HEK293 (cell line): ENCODE measurements at regions of chr16 and their contacts with region 1.

Region 1: DNA sequence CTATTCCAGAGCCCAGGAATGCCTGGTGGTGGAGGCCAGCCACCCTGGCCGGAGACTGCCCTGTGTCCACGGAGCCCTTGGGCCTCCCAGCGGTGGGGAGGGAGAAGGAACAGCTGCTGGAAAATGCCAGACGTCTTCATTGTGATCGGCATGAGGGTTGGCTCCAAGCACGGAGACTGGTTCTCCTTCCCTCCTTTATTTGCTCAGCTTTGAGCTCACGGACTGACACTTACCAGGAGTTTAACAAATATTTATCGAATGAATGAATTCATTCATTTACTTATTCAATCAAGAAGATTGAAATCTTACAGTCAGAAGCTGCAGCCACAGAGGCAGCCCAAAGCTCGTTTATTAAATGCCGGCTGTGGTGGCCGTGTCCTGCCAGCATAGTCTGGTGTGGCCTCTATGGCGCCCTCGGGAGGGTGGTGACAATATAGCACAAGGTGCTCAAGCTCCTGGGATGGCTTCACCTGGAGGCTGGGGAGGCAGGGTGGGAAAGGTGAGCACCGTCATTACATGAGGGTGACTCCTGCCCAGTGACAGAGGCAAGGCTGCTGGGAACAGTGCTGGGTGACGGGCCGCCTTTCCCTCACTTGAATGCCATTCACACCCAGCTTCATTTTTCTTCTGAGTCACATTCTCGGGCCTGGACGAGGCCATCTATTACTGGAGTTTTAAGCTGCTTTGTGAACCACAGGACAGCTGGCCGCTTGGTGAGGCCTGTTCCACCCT is 31.0 kb upstream of the JPH3 start:
- H3K4me3 ChIP-seq: no peak overlapping the region
- H3K27ac ChIP-seq: no peak overlapping the region
- H3K4me1 ChIP-seq: no peaks in the 10 kb centered on the region
- CTCF ChIP-seq: no peak

Region 2: GRCh38 chr16:87216474-87217275 is 354.6 kb before region 1 on chr16:
- CTCF ChIA-PET with region 1: no interaction called
- POLR2A ChIA-PET with region 1: no interaction called
- H3K4me3 ChIP-seq: no peak overlapping the region
- H3K27ac ChIP-seq: no peak overlapping the region
- H3K4me1 ChIP-seq: no peaks in the 10 kb centered on the region
- CTCF ChIP-seq: no peak

Region 3: GRCh38 chr16:87416826-87417527 is 154.3 kb before region 1 on chr16:
- CTCF ChIA-PET with region 1: interaction called, 13 read pairs
- POLR2A ChIA-PET with region 1: no interaction called
- H3K4me3 ChIP-seq: no peak overlapping the region
- H3K27ac ChIP-seq: no peak overlapping the region
- H3K4me1 ChIP-seq: no peaks in the 10 kb centered on the region
- CTCF ChIP-seq: no peak

Region 4: DNA sequence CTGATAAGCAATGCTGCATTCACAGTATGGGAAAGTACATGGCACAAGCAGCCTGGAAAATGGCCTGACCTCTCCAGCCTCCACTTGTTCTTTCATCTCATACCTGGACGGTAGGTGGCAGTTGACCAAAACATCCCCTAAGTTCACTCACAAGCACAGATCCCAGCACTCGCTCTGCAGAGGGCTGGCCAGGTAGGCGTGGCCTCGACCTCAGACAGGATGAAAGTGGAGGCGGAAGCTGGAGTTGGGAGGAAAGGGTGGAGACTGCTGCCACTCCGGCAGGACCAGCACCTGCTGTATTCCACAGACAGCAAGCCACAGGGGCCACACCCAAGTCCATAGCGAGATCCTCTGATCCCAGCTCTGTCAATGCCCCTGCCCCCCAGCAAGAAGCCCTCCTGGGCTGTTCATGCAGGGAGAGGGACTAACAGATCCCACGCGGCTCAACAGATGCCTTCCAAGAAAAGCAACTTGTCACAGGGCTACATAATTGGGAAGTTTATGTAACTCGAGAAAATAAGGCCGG is 109.8 kb before region 1 on chr16:
- CTCF ChIA-PET with region 1: interaction called, 10 read pairs
- POLR2A ChIA-PET with region 1: no interaction called
- H3K4me3 ChIP-seq: peak overlapping the region; percentile 16; the same call in 1 of the 2 replicates
- H3K27ac ChIP-seq: no peak overlapping the region
- H3K4me1 ChIP-seq: peaks cover 29% of the 10 kb centered on the region
- CTCF ChIP-seq: 0 out of 2 replicates have a peak, but pooled peaks have one; percentile 48

Region 5: DNA sequence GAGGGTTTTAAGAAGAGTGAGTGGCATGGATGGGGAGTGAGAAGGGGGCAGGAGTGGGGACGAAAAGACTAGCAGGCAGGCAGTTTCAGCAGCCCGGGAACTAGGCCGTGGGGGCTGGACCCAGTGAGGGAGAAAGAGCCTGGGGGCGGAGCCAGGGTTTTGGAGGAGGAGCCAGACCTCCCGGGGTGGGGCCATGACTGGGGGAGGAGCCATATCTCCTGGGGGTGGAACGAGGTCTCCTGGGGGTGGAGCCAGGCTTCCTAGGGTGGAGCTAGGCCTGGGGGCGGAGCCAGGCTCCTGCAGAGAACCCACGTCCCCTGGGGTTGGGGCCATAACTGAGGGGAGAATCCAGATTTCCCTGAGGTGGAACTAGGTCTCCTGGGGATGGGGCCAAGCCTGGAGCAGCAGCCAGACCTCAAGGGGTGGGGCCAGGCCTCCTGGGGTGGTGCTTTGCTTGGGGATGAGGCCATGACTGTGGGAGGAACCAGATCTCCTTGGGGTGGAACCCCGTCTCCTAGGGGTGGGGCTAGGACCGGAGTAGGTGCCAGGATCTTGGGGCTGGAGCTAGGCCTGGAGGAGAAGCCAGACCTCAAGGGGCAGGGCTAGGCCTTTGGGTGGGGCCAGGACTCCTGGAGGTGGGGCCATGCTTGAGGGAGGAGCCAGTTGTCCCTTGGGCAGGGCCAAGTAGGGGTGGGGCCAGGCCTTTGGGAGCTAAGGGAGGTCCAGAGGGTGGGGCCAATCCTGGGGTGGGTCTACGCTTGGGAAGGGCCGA is 10.7 kb before region 1 on chr16:
- CTCF ChIA-PET with region 1: interaction called, 13 read pairs
- POLR2A ChIA-PET with region 1: interaction called, 6 read pairs
- H3K4me3 ChIP-seq: no peak overlapping the region
- H3K27ac ChIP-seq: no peak overlapping the region
- H3K4me1 ChIP-seq: no peaks in the 10 kb centered on the region
- CTCF ChIP-seq: no peak

Region 6: GRCh38 chr16:87581833-87582203 is 10.5 kb after region 1 on chr16:
- CTCF ChIA-PET with region 1: interaction called, 10 read pairs
- POLR2A ChIA-PET with region 1: interaction called, 5 read pairs
- H3K4me3 ChIP-seq: no peak overlapping the region
- H3K27ac ChIP-seq: no peak overlapping the region
- H3K4me1 ChIP-seq: 0 out of 2 replicates have a peak, but pooled peaks cover 3% of the 10 kb centered on the region
- CTCF ChIP-seq: no peak

Region 7: DNA sequence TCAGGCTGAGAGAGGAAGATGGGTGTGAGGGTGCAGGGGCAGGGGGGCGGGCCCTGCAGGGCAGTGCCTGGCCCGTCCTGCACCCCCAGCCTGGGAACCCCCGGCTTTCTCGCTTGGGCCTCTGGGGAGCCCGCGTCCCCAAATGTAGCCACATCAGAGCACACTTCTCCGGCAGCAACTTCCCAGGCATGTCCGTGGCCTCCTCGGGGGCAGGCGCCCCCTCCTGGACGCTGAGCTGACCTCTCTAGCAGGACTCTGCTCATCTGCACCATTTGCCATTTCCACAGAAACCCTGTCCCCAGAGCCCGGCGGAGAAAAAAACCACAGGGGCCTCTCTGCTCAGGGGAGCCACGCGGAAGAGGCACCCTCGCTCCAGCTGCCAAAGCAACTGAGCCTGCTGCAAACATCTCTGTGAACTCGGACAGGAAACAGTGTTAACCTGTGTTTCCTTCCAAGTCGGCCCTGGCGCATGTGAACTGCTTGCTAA is 131.1 kb after region 1 on chr16:
- CTCF ChIA-PET with region 1: no interaction called
- POLR2A ChIA-PET with region 1: no interaction called
- H3K4me3 ChIP-seq: no peak overlapping the region
- H3K27ac ChIP-seq: no peak overlapping the region
- H3K4me1 ChIP-seq: no peaks in the 10 kb centered on the region
- CTCF ChIP-seq: peak; percentile 61